ENCODE measurements at regions of chr6 and their contacts with region 1.

Region 1: DNA sequence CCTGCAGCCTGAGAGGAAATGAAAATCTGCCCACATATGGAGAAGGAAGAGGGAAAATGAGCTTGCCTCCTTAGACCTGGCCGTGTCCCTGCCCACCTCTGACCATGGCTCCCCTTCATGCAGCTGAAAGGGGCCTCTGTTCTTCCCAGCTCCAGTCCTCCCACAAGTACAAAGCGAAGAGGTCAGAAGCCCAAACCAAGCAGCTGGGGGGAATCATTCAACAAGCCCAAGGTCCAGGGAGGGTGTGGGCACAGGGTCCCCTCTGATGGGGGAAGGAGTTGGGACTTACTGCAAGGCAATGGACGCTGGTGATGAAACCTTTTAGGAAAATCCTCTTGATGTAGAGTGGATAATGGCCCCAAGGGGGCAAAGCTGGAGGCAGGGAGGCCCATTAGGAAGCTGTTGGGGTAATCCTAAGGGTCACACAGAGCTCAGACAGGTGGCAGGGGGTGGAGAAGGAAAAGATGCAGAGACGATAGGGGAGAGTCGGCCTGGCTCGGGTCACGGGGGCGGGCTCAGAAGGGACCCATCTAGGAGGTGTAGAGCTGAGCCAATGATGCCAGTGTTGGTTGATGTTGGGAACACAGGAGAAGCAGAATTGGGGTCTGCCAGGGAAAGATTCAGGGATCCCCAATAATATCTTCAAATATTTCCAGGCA is 16.1 kb upstream of the GRM4 start:
- DNase-seq: no peak
- H3K4me3 Mint-ChIP-seq: no peak overlapping the region
- H3K27ac Mint-ChIP-seq: no peak overlapping the region
- H3K4me1 Mint-ChIP-seq: no peaks in the 10 kb centered on the region
- H3K27me3 Mint-ChIP-seq: no peaks in the 10 kb centered on the region

Region 2: DNA sequence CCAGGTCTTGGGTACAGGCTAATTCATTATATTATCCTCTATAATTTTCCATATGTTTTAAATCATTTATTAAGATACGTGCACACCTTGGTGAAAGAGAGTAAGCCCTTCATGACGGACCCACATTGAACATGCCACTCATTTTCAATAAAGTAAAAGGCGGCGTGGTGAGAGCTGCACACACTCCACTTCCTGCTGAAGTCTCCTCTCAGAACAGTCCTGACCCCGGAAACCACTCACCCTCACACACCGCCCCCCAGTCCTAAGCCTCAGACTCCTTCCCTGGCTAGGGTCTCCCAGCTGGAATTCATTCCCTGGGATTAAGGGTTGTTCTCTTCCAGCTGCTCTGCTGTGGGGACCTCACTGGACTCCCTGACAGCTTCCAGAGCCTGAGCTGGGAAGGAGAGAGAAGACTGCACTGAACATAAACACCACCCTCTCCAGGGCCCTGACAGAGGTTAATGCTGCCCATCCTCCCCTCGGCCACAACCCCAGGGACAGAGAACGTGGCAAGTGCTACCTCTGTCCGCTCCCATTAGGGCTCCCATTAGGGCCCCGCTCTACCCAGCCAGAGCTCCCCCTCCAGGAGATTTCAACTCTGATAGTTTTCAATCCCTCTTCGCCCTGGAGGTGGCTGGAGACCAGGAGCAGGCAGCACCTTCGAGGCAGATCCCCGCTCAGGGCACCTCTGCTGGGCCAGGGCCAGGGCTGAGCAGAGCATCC is 40.9 kb before region 1 on chr6:
- CTCF ChIA-PET with region 1: no interaction called
- POLR2A ChIA-PET with region 1: no interaction called
- intact Hi-C with region 1: no loop called
- DNase-seq: no peak
- H3K4me3 Mint-ChIP-seq: no peak overlapping the region
- H3K27ac Mint-ChIP-seq: no peak overlapping the region
- H3K4me1 Mint-ChIP-seq: no peaks in the 10 kb centered on the region
- H3K27me3 Mint-ChIP-seq: peaks cover 11% of the 10 kb centered on the region

Region 3: DNA sequence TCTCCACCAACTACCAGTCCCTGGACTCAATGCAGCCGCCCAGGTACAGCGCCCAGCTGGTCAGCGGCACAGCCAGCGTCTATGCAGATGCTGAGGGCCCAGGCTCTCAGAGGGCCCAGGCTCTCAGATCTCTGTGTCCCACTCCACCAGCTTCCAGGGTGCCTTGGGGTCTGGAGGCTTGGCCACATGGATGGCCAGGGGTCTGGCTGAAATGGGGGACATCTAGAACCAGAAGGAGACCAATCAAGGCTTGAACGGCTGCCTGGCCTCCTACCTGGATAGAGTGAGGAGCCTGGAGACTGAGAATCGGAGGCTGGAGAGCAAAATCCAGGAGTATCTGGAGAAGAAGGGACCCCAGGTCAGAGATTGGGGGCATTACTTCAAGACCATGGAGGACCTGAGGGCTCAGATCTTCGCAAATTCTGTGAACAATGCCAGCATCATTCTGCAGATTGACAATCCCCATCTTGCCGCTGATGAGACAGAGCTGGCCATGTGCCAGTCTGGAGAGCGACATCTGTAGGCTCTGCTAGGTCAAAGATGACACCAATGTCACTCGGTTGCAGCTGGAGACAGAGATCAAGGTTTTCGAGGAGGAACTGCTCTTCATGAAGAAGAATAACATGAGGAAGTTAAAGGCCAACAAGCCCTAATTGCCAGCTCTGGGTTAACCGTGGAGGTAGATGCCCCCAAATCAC is 28.0 kb after region 1 on chr6:
- CTCF ChIA-PET with region 1: interaction called, 22 read pairs
- POLR2A ChIA-PET with region 1: no interaction called
- intact Hi-C with region 1: no loop called
- DNase-seq: peak; percentile 53
- H3K4me3 Mint-ChIP-seq: no peak overlapping the region
- H3K27ac Mint-ChIP-seq: no peak overlapping the region
- H3K4me1 Mint-ChIP-seq: peaks cover 4% of the 10 kb centered on the region
- H3K27me3 Mint-ChIP-seq: no peaks in the 10 kb centered on the region

Region 4: GRCh38 chr6:34414999-34415858 is 253.2 kb after region 1 on chr6:
- CTCF ChIA-PET with region 1: interaction called, 25 read pairs
- POLR2A ChIA-PET with region 1: no interaction called
- intact Hi-C with region 1: loop called (anchors 5 kb)
- DNase-seq: peak; percentile 35
- H3K4me3 Mint-ChIP-seq: no peak overlapping the region
- H3K27ac Mint-ChIP-seq: peak overlapping the region; percentile 8
- H3K4me1 Mint-ChIP-seq: peaks cover 12% of the 10 kb centered on the region
- H3K27me3 Mint-ChIP-seq: no peaks in the 10 kb centered on the region

Measured in activated CD4-positive, alpha-beta memory T cell treated with anti-CD3 and anti-CD28 coated beads for 36 hours (primary cell).